CD4-positive, alpha-beta memory T cell (primary cell): ENCODE measurements at regions of chr2 and their contacts with region 1.

Region 1: DNA sequence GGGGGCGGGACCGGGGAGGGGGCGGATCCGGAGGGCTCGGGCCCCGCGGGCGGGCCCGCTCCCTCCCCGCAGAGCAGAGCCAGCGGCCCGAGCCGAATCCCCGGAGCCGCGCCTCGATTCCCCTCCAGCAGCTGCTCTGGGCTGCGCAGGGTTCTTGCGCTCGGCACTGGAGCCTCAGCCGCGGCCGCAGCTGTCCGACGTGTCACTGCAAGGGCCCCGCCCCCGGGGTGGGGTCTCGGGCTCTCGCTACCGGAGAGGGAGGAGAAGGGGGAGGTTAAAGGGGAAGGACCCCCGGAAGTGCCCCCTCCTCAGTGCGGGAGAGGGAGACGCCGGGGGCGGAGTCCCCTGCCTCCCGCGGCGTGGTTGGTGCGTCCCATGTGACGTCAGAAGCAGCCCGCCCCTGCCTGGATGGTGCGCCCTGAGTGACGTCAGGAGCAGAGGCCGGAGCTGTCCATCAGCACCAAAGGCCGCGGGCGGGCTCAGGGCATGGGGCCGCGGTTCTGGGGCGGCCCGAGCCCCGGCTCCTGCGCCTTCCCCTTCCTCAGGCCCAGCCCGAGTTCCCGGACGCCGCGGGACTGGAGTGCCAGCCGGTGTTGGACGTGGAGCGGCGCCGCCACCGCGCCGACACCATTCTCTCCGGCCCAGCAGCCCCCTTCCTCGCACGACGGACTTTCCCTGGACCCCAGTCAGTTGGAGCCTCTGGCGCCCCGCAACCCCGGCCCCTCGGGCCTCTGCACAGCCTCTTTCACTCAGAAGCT is at the starts of genes CHPF and TMEM198:
- DNase-seq: peak; percentile 90 to 95 (median 91)
- H3K4me3 ChIP-seq: peak within 1 kb of the TSS; percentile 29 to 75
- H3K4me3 Mint-ChIP-seq: peak within 1 kb of the TSS; percentile 84 to 92 (median 90)
- H3K27ac ChIP-seq: peak within 1 kb of the TSS; percentile 62
- H3K27ac Mint-ChIP-seq: peak within 1 kb of the TSS; percentile 84 to 93 (median 92)
- H3K4me1 ChIP-seq: peaks cover 21% of the 10 kb centered on the region
- H3K4me1 Mint-ChIP-seq: peaks cover 15 to 34% (median 23%) of the 10 kb centered on the region in 4 donors
- H3K27me3 ChIP-seq: no peaks in the 10 kb centered on the region
- H3K27me3 Mint-ChIP-seq: peaks cover 7 to 10% of the 10 kb centered on the region in 2 donors
- total RNA-seq, gene CHPF: 7.7 to 8.5 TPM
- total RNA-seq, gene TMEM198: 0.67 to 0.76 TPM

Region 2: GRCh38 chr2:219498280-219499057 is 45.3 kb before region 1 on chr2 and contains the start of gene GMPPA:
- CTCF ChIA-PET with region 1: interaction called, 20 read pairs
- POLR2A ChIA-PET with region 1: interaction called, 27 read pairs
- intact Hi-C with region 1: loop called (anchors 1 kb)
- DNase-seq: peak; percentile 91 to 97 (median 92)
- H3K4me3 ChIP-seq: peak within 1 kb of the TSS; percentile 62 to 70
- H3K4me3 Mint-ChIP-seq: peak within 1 kb of the TSS; percentile 92 to 100 (median 99)
- H3K27ac ChIP-seq: peak within 1 kb of the TSS; percentile 53
- H3K27ac Mint-ChIP-seq: peak within 1 kb of the TSS; percentile 60 to 99 (median 94)
- H3K4me1 ChIP-seq: peaks cover 37% of the 10 kb centered on the region
- H3K4me1 Mint-ChIP-seq: peaks cover 22 to 39% (median 31%) of the 10 kb centered on the region in 4 donors
- H3K27me3 ChIP-seq: peaks cover 33% of the 10 kb centered on the region
- H3K27me3 Mint-ChIP-seq: peaks cover 31 to 34% of the 10 kb centered on the region in 2 donors
- total RNA-seq, gene GMPPA: 45.2 to 48.3 TPM

Region 3: DNA sequence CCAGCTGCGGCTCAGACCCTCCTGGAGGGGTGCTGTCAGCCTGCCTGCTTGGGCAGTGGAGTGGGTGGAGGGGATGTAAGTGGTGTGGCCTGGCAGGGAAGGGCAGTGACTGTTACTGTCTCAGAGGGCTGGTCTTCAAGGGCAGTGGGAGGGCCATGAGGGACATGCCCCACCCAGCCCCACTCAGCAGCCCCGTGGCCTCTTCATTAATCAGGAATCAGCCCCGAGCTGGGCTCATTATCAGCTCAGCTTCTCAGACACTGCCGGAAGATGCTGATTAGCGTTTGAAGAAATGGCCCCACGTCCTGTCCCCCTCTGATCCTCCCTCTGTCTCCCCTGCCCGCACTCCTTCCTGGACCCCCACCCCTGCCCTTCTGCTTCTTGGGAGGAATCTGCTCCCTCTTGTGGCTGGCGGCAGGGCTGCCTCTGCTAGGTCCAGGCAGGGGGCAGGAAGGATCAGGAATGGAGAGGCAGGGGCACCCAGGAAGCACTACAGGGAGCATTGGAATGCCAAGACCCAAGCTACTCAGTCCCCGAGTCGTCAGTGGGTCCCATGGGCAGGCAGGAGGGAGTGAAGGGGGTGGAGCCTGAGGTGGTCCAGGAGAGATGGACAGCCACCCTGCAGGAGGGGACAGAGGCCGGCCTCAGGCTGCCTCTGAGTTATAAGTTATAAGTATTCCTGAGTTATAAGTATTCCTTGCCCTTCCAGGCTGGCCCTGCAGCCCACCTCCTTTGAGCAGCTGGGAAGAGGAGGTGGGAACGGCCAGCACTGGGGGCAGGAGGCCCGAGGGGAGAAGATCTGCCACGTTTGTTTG is 22.5 kb before region 1 on chr2:
- CTCF ChIA-PET with region 1: interaction called, 60 read pairs
- POLR2A ChIA-PET with region 1: no interaction called
- intact Hi-C with region 1: no loop called
- DNase-seq: no peak
- H3K4me3 ChIP-seq: no peak overlapping the region
- H3K4me3 Mint-ChIP-seq: peak overlapping the region in 3 of 8 donors; percentile 2 to 73 (median 3)
- H3K27ac ChIP-seq: no peak overlapping the region
- H3K27ac Mint-ChIP-seq: peak overlapping the region in 2 of 7 donors; percentile 17 to 54
- H3K4me1 ChIP-seq: peaks cover 10% of the 10 kb centered on the region
- H3K4me1 Mint-ChIP-seq: peaks cover 10 to 19% (median 12%) of the 10 kb centered on the region in 4 donors
- H3K27me3 ChIP-seq: peaks cover 29% of the 10 kb centered on the region
- H3K27me3 Mint-ChIP-seq: peaks cover 67 to 79% of the 10 kb centered on the region in 2 donors

Region 4: GRCh38 chr2:219560037-219560892 is 16.5 kb after region 1 on chr2:
- CTCF ChIA-PET with region 1: interaction called, 73 read pairs
- POLR2A ChIA-PET with region 1: interaction called, 3 read pairs
- intact Hi-C with region 1: loop called (anchors 1 kb)
- DNase-seq: peak in 4 of 5 donors; percentile 19 to 37 (median 28)
- H3K4me3 ChIP-seq: no peak overlapping the region
- H3K4me3 Mint-ChIP-seq: no peak overlapping the region
- H3K27ac ChIP-seq: no peak overlapping the region
- H3K27ac Mint-ChIP-seq: no peak overlapping the region
- H3K4me1 ChIP-seq: no peaks in the 10 kb centered on the region
- H3K4me1 Mint-ChIP-seq: peaks cover 0 to 2% (median 0%) of the 10 kb centered on the region in 4 donors
- H3K27me3 ChIP-seq: no peaks in the 10 kb centered on the region
- H3K27me3 Mint-ChIP-seq: peaks cover 10 to 22% of the 10 kb centered on the region in 2 donors

Region 5: DNA sequence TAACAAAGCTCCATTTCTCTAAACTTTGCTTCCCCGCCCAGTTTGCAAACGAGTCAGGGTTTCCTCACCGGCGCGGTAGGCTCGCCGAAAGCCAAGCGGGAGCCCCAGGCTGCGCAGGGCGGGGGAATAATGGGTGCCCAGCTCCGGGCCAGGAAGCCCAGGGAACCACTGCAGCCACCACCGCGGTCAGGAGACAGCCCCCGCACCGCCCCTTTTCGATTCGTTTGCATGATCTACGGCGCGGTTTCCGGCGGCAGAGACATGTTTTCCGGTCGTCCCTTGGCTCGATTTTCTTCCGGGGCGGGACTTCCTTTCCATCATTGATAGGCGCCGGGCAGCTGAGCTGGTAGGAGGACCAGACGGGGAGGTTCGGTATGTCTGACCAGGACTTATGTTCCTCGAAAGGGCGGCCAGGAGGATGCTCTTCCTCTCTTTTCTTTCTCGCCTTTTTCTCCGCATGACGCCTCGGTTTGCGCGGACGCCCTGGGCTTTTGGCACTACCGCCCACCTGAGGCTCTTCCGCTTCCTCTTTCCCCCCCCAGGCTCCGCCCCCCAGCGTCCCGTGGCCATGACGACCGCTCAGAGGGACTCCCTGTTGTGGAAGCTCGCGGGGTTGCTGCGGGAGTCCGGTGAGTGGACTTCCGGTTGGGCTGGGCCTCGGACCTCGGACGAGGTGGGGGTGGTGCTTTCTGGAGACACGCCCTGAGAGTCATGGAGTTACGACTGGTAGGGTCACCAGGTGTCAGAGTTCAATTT is 54.0 kb after region 1 on chr2 and contains the start of gene STK11IP:
- CTCF ChIA-PET with region 1: interaction called, 16 read pairs
- POLR2A ChIA-PET with region 1: interaction called, 13 read pairs
- intact Hi-C with region 1: loop called (anchors 1 kb)
- DNase-seq: peak; percentile 87 to 93 (median 88)
- H3K4me3 ChIP-seq: peak within 1 kb of the TSS; percentile 62 to 100
- H3K4me3 Mint-ChIP-seq: peak within 1 kb of the TSS; percentile 90 to 97 (median 96)
- H3K27ac ChIP-seq: peak within 1 kb of the TSS; percentile 72
- H3K27ac Mint-ChIP-seq: peak within 1 kb of the TSS; percentile 90 to 99 (median 97)
- H3K4me1 ChIP-seq: peaks cover 14% of the 10 kb centered on the region
- H3K4me1 Mint-ChIP-seq: peaks cover 10 to 24% (median 17%) of the 10 kb centered on the region in 4 donors
- H3K27me3 ChIP-seq: no peaks in the 10 kb centered on the region
- H3K27me3 Mint-ChIP-seq: peaks cover 3 to 7% of the 10 kb centered on the region in 2 donors
- total RNA-seq, gene STK11IP: 48.7 to 50.2 TPM

Region 6: DNA sequence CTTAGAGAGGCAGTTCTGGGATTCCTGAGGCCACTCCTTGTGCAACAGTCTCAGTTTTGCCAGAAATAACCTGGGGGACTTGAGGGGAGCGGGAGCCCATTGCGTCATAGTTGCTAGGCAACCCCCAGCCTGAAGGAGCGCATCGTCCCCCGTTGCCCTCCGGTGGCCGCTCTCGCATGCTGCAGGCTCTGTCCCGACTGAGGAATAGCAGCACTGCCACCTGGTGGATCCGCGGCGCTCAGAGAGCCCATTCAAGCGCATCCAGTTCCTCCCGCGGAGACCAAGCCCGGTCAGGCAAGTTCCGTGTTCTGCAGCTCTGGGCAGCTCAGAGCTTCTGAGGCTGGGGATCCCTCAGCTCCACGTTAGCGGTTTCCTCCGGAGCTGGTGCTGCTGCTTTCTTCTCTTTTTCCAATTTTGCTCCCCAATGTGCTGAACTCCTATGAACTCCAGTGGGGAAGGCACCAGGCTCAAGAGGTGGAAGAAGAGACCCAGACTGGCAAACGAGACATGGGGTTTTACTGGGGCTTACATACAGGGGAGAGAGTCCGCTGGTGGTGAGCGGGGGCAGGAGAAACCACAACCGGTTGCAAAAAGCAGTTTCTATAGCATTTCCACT is 98.8 kb after region 1 on chr2:
- CTCF ChIA-PET with region 1: interaction called, 51 read pairs
- POLR2A ChIA-PET with region 1: no interaction called
- intact Hi-C with region 1: no loop called
- DNase-seq: peak; percentile 80 to 88 (median 83)
- H3K4me3 ChIP-seq: no peak overlapping the region
- H3K4me3 Mint-ChIP-seq: no peak overlapping the region
- H3K27ac ChIP-seq: no peak overlapping the region
- H3K27ac Mint-ChIP-seq: peak overlapping the region in 4 of 7 donors; percentile 32 to 70 (median 53)
- H3K4me1 ChIP-seq: no peaks in the 10 kb centered on the region
- H3K4me1 Mint-ChIP-seq: peaks cover 0 to 6% (median 4%) of the 10 kb centered on the region in 4 donors
- H3K27me3 ChIP-seq: no peaks in the 10 kb centered on the region
- H3K27me3 Mint-ChIP-seq: peaks cover 12 to 36% of the 10 kb centered on the region in 2 donors